B cell (primary cell): ENCODE measurements at regions of chr21 and their contacts with region 1.

Region 1: DNA sequence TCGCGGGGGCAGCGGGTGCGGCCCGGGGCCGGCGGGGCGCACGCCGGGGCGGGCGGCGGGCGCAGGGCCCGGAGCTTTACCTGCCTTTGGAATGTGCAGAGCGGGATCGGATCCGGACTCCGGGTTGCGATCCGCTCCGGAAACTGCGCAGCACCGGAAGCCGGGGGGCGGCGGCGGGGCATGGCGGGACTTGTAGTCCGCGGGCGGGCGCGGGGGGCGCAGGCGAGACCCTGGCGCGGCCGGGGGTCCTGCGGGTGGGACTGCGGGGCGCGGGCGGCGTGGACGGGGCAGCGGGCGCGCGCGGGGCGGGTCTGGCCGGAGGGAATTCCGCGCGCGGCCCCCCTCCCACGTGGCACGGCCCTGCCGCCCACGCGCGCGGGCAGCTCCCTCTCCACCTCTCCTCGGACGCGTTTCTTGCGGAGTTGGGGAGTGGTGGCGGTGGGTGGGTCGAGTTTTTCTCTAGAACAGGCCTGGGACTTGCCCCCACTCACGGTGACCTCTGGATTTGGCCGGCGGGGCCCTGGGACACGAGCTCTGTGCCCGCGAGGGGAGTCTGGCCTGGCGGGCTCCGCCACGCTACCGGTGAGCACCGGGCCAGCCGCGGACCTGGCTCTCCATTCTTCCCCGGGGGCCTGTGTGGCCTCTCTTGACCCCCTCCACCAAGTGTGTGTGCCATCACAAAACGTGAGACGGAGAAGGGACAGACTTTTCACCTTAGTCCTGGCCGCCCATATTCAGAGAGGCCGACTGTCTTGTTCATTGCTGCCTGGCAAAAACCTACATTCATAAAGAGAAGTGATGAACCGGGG is at the start of gene PRDM15:
- DNase-seq: peak; percentile 83
- ATAC-seq: peak; percentile 67
- H3K4me3 ChIP-seq: peak within 1 kb of the TSS; percentile 53 to 86 (median 81)
- H3K4me3 Mint-ChIP-seq: peak within 1 kb of the TSS; percentile 94
- H3K27ac ChIP-seq: peak within 1 kb of the TSS; percentile 76 to 80
- H3K27ac Mint-ChIP-seq: peak within 1 kb of the TSS; percentile 97
- H3K4me1 ChIP-seq: peaks cover 13 to 21% of the 10 kb centered on the region in 2 donors
- H3K4me1 Mint-ChIP-seq: peaks cover 35% of the 10 kb centered on the region
- H3K27me3 ChIP-seq: no peaks in the 10 kb centered on the region
- H3K27me3 Mint-ChIP-seq: no peaks in the 10 kb centered on the region
- CTCF ChIP-seq: no peak
- total RNA-seq, gene PRDM15: 20.7 and 21.3 TPM in 2 replicates

Region 2: DNA sequence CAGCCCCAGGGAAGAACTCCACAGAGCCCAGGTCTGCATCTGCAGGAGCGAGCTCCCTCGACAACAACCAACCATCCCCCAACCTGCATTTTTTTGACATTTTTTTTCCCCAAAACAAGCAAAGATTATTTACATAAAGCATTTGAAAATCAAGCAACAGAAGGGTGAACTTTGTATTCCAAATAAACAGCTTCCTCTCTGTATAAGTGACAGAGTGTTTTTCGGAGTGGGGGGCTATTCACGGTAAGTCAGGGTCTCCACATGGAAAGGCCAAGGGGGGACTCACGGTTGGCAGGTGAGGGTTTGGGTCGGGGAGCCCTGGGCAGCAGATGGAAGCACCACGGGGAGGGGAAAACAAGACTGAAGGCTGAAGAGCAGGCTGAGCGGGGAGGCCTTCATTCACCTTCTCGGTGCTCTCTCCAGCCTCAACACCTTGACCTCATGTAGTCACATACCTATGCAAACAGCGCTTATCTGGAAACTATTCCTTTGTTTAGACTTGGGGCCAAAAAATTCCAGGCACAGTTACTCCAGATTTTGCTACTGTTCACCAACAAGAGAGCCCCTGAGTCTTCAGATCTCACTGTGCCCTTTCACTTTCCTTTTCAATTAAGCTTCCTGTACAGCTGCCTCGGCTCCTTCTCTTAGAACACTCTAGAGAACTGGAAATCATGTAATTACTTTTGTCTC is 46.9 kb after region 1 on chr21:
- CTCF ChIA-PET with region 1: interaction called, 6 read pairs
- POLR2A ChIA-PET with region 1: interaction called, 3 read pairs
- intact Hi-C with region 1: loop called (anchors 2 kb)
- DNase-seq: peak; percentile 76
- ATAC-seq: peak; percentile 70
- H3K4me3 ChIP-seq: peak overlapping the region; percentile 55 to 70 (median 62)
- H3K4me3 Mint-ChIP-seq: peak overlapping the region; percentile 94
- H3K27ac ChIP-seq: peak overlapping the region; percentile 82 to 87
- H3K27ac Mint-ChIP-seq: peak overlapping the region; percentile 98
- H3K4me1 ChIP-seq: peaks cover 71 to 85% of the 10 kb centered on the region in 2 donors
- H3K4me1 Mint-ChIP-seq: peaks cover 81% of the 10 kb centered on the region
- H3K27me3 ChIP-seq: no peaks in the 10 kb centered on the region
- H3K27me3 Mint-ChIP-seq: no peaks in the 10 kb centered on the region
- CTCF ChIP-seq: no peak